CD4-positive, alpha-beta T cell (primary cell): ENCODE measurements at regions of chr7 and their contacts with region 1.

Region 1: DNA sequence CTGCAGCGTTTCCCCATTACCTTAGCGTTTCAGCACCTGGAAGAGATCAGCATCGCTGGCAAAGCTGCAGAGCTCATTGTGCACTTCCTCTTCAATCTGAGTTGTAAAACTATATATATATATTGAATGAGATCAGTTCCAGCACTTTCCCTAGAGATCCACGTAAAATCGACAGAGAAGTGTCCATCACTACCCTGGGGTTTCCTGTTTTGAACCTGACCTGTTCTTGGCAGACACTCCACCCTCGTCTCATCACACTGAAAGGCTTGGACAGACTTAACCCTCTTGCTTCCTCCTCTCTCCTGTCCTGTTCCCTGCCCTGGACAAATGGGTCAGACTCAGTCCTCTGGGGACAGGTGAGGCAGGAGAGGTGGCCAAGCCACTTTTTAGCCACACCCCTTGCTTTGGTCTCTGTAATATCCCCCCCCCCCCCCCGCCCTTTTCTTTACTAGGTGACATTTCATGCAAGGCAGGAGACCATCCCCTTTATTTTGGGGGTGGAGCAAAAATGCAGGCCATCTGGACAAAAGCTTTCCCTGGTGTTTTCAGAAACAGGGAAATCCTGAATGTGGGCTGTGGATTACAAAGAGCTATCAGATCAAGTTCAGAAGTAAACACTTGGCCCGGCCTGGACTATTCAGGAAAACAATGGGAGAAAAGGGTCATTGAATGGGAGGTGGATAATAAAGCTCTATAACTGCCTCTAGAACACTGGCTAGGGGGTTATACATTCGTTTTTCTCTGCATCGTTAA is 83.7 kb upstream of the KDM7A start:
- DNase-seq: no peak
- ATAC-seq: no peak
- H3K4me3 ChIP-seq: no peak overlapping the region
- H3K4me3 Mint-ChIP-seq: no peak overlapping the region
- H3K27ac ChIP-seq: no peak overlapping the region
- H3K27ac Mint-ChIP-seq: peak overlapping the region; percentile 40
- H3K4me1 ChIP-seq: peaks cover 36% of the 10 kb centered on the region
- H3K4me1 Mint-ChIP-seq: peaks cover 45% of the 10 kb centered on the region
- H3K27me3 ChIP-seq: no peaks in the 10 kb centered on the region
- H3K27me3 Mint-ChIP-seq: no peaks in the 10 kb centered on the region
- CTCF ChIP-seq: no peak

Region 2: GRCh38 chr7:140249036-140249806 is 11.3 kb before region 1 on chr7:
- CTCF ChIA-PET with region 1: interaction called, 4 read pairs
- POLR2A ChIA-PET with region 1: interaction called, 10 read pairs
- intact Hi-C with region 1: no loop called
- DNase-seq: no peak
- ATAC-seq: no peak
- H3K4me3 ChIP-seq: no peak overlapping the region
- H3K4me3 Mint-ChIP-seq: no peak overlapping the region
- H3K27ac ChIP-seq: no peak overlapping the region
- H3K27ac Mint-ChIP-seq: no peak overlapping the region
- H3K4me1 ChIP-seq: peaks cover 24% of the 10 kb centered on the region
- H3K4me1 Mint-ChIP-seq: peaks cover 15% of the 10 kb centered on the region
- H3K27me3 ChIP-seq: no peaks in the 10 kb centered on the region
- H3K27me3 Mint-ChIP-seq: no peaks in the 10 kb centered on the region
- CTCF ChIP-seq: no peak

Region 3: DNA sequence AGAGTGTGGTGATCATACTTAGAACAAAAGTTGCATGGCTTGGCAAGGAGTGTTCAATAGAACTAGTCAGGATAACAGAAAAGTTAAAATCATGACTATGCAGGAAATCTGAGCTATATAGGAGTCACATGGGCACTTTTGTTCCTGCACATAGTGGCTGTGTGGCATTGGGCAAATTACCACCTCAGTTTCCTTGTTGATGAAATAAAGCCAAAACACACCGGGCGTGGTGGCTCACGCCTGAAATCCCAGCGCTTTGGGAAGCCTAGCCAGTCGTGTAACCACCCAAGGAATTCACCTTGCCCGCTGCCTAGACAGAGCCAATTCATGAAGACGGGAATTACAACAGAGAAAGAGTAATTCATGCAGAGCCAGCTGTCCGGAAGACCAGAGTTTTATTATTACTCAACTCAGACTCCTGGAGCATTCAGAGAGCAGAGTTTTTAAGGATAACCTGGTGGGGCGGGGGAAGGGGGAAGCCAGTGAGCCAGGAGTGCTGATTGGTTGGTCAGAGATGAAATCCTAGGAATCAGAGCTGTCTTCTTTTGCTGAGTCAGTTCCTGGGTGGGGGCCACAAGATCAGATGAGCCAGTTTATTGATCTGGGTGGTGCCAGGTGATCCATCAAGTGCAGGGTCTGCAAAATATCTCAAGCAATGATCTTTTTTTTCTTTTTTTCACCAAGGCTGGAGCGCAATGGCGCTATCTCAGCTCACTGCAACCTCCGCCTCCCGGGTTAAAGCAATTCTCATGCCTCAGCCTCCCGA is 225.2 kb after region 1 on chr7:
- CTCF ChIA-PET with region 1: no interaction called
- POLR2A ChIA-PET with region 1: no interaction called
- intact Hi-C with region 1: no loop called
- DNase-seq: no peak
- ATAC-seq: no peak
- H3K4me3 ChIP-seq: no peak overlapping the region
- H3K4me3 Mint-ChIP-seq: no peak overlapping the region
- H3K27ac ChIP-seq: no peak overlapping the region
- H3K27ac Mint-ChIP-seq: no peak overlapping the region
- H3K4me1 ChIP-seq: no peaks in the 10 kb centered on the region
- H3K4me1 Mint-ChIP-seq: no peaks in the 10 kb centered on the region
- H3K27me3 ChIP-seq: no peaks in the 10 kb centered on the region
- H3K27me3 Mint-ChIP-seq: no peaks in the 10 kb centered on the region
- CTCF ChIP-seq: no peak